K562 (cell line): ENCODE measurements at regions of chr15 and their contacts with region 1.

Region 1: DNA sequence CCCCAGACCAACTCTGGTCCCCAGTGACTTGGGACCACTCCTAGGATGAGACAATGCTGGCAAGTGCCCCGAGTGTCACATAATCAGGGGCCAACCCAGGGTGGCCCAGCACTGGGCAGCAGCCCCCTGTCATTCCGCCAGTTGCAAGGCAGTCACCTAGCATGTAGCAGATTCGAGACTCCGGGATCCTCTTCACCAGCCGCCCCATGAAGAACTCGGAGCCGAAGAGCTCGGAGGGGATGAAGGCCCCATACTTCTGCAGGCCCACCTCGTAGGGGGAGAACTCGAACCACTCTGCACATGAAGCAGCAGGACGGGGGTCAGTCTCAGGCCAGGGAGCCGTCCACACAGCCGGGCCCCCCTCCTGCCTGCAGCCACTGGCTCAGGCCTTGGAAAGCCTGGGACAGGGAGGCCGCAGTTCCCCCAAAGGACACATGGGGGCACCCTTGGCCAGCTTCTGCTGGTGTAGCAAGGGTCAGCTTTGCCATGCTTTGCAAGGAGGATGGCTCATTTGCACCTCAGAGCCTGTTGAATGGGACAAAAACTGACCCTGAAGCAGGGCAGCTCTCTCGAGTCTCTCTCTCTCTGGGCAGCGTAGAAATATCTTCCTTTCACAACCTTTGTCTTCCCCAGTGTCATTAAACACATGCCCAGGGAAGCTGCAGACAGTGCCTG is 17.0 kb upstream of the EHD4 start:
- DNase-seq: peak; percentile 81 to 86 (median 85)
- ATAC-seq: peak; percentile 97
- H3K4me3 ChIP-seq: no peak overlapping the region
- H3K27ac ChIP-seq: no peak overlapping the region
- H3K4me1 ChIP-seq: peaks cover 0 to 5% of the 10 kb centered on the region in 2 experiments; a peak in 1 of 5 replicates
- H3K27me3 ChIP-seq: peaks cover 42 to 74% of the 10 kb centered on the region in 2 experiments; a peak in 4 of 5 replicates
- CTCF ChIP-seq: peak; percentile 95 to 98 (median 96)
- EP300 ChIP-seq: no peak
- POLR2A ChIP-seq: no peak
- RAD21 ChIP-seq: peak; percentile 93 to 98

Region 2: GRCh38 chr15:42056934-42057779 is 67.8 kb after region 1 on chr15:
- CTCF ChIA-PET with region 1: interaction called, 71 read pairs
- POLR2A ChIA-PET with region 1: interaction called, 3 read pairs
- in situ Hi-C with region 1: loop called (anchors 5 kb)
- intact Hi-C with region 1: loop called (anchors 2 kb)
- DNase-seq: peak; percentile 40 to 69 (median 58)
- ATAC-seq: peak; percentile 96
- H3K4me3 ChIP-seq: peak overlapping the region; percentile 28
- H3K27ac ChIP-seq: no peak overlapping the region
- H3K4me1 ChIP-seq: peaks cover 0 to 6% of the 10 kb centered on the region in 2 experiments; a peak in 3 of 5 replicates
- H3K27me3 ChIP-seq: peaks cover 20 to 42% of the 10 kb centered on the region in 2 experiments
- CTCF ChIP-seq: peak; percentile 65 to 78 (median 72)
- EP300 ChIP-seq: no peak
- POLR2A ChIP-seq: no peak
- RAD21 ChIP-seq: peak; percentile 65 to 78

Region 3: DNA sequence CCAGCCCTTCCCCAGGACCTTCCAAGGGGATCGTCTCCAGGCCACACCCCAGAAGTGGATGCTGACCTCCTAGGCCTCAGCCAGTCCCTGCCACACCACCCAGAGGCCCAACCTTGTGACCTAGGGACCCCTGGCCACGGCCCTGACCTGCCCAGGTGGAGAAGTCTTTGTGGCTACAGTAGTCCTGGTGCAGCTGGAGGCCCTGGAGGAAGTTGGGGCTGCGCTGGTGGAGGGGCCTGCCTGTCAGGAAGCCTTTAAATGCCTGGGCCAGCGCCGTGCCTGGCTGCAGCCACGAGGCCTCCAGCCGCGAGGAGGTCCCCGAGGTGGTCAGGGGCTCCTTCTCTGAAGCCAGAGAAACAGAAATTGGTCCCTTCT is 81.6 kb after region 1 on chr15:
- CTCF ChIA-PET with region 1: no interaction called
- POLR2A ChIA-PET with region 1: no interaction called
- in situ Hi-C with region 1: no loop called
- intact Hi-C with region 1: no loop called
- DNase-seq: no peak
- ATAC-seq: no peak
- H3K4me3 ChIP-seq: no peak overlapping the region
- H3K27ac ChIP-seq: no peak overlapping the region
- H3K4me1 ChIP-seq: peaks cover 0 to 8% of the 10 kb centered on the region in 2 experiments; a peak in 2 of 5 replicates
- H3K27me3 ChIP-seq: peaks cover 18 to 74% of the 10 kb centered on the region in 2 experiments
- CTCF ChIP-seq: no peak
- EP300 ChIP-seq: no peak
- POLR2A ChIP-seq: no peak
- RAD21 ChIP-seq: no peak

Region 4: DNA sequence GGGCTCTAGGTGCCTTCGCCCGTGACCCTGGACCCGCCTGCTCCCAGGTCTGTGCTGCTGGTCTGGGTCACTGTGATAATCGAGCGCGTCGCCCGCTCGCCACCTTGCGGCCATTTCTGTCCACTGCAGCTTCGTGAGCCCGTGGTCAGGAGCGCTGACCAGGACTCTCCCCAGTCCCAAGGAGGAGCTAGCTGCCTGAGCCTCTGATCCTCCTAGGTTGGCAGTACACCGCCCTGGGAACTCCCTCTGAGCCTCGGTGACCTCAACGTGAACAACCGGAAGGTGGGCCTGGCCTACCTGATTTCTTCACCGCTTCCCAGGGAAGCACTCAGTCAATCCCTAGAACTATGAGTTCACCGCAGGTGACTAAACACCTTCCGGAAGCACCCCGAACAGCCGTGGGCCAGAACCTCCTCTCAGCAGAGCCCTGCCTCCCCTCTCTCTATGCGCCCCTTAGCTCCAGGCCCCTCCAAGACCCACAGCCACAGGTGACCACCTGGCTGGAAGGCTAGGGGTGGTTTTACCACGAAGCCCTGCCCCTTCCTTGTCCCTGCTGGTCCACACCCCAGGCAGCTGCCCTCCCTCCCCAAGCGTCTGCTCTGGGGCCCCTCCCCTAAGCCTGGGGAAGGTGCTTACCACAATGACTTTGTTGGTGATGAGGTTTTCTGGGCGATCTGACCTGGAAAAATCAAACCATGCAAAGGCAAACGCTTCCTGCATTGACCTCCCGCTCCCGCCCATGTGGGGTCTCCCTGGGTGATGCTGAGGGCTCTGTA is 95.3 kb after region 1 on chr15:
- CTCF ChIA-PET with region 1: interaction called, 7 read pairs
- POLR2A ChIA-PET with region 1: interaction called, 3 read pairs
- in situ Hi-C with region 1: no loop called
- intact Hi-C with region 1: loop called (anchors 1 kb)
- DNase-seq: peak; percentile 77 to 83 (median 80)
- ATAC-seq: peak; percentile 96
- H3K4me3 ChIP-seq: no peak overlapping the region
- H3K27ac ChIP-seq: no peak overlapping the region
- H3K4me1 ChIP-seq: peaks cover 0 to 20% of the 10 kb centered on the region in 2 experiments; a peak in 3 of 5 replicates
- H3K27me3 ChIP-seq: peaks cover 33 to 83% of the 10 kb centered on the region in 2 experiments
- CTCF ChIP-seq: peak; percentile 91 to 97 (median 91)
- EP300 ChIP-seq: no peak
- POLR2A ChIP-seq: no peak
- RAD21 ChIP-seq: peak; percentile 61 to 83

Region 5: DNA sequence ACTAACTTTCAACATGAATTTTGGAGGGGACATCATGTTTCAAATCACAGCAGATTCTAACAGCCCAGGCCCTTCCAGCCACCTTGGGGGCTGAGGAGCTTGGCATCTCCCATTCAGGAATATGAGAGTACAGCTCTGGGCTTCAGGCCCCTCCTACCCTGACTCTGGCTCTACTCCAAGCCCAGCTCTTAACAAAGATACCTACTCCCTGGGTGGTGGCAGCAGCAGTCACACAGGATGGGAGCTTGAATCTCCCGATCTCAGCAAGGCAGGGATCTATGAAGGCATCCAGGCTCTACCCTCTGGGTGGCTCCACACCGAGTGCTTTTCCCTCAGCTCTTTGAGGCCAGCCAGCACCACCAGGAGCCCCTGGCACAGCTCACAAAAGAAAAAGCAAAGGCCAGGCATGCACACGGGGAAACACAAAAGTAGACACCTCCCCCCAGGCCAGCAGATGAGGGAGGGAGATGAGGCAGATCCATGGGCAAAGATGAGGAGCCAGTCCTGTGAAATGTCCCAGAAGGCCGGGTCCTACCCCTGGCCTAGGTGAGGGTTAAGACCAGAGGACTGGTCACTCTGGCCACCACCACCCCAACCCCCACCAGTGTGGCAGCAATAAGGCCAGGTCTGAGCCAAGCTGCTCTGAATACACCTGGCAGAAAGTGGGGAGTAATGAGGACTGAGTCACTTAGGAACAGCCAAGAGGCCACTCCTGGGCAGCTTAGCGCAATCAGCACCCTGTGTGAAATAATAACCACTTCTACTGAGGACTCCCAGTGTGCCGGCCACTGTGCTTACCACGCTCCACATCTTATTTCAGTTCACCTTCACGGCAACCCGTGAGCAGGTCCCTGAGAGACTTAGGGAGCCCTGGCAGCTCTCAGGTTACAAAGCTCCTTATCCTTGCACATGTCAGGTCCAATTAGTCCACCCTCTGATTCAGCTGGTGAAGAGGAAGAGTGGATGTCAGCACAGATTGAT is 142.7 kb after region 1 on chr15:
- CTCF ChIA-PET with region 1: interaction called, 3 read pairs
- POLR2A ChIA-PET with region 1: interaction called, 3 read pairs
- in situ Hi-C with region 1: no loop called
- intact Hi-C with region 1: loop called (anchors 2 kb)
- DNase-seq: peak in 1 of 4 experiments; percentile 4
- ATAC-seq: no peak
- H3K4me3 ChIP-seq: no peak overlapping the region
- H3K27ac ChIP-seq: no peak overlapping the region
- H3K4me1 ChIP-seq: no peaks in the 10 kb centered on the region
- H3K27me3 ChIP-seq: peaks cover 6 to 40% of the 10 kb centered on the region in 2 experiments; a peak in 4 of 5 replicates
- CTCF ChIP-seq: no peak
- EP300 ChIP-seq: no peak
- POLR2A ChIP-seq: no peak
- RAD21 ChIP-seq: no peak

Region 6: DNA sequence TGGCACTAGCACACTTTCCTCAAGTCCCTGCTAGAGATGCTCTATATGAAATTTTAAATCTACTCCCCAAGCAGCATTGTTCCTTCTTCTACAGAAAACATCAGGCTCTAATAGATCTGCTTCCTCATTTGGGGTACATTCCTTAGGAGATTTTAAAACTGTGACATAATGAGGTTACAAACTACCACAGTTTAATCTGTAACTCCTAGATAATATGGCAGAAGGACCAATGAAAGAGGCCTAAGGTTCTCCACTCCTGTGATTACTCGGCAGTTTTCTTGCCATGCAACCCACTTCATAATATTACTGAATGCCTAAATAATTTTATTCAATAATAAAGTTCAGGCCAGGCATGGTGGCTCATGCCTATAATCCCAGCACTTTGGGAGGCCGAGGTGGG is 485.4 kb after region 1 on chr15:
- CTCF ChIA-PET with region 1: no interaction called
- POLR2A ChIA-PET with region 1: no interaction called
- in situ Hi-C with region 1: no loop called
- intact Hi-C with region 1: loop called (anchors 10 kb)
- DNase-seq: peak in 1 of 4 experiments; percentile 16
- ATAC-seq: peak; percentile 36; the same call in 2 of the 3 replicates
- H3K4me3 ChIP-seq: no peak overlapping the region
- H3K27ac ChIP-seq: no peak overlapping the region
- H3K4me1 ChIP-seq: no peaks in the 10 kb centered on the region
- H3K27me3 ChIP-seq: no peaks in the 10 kb centered on the region
- CTCF ChIP-seq: no peak
- EP300 ChIP-seq: no peak
- POLR2A ChIP-seq: no peak
- RAD21 ChIP-seq: no peak